PC-3 (cell line): ENCODE measurements at regions of chr18 and their contacts with region 1.

Region 1: DNA sequence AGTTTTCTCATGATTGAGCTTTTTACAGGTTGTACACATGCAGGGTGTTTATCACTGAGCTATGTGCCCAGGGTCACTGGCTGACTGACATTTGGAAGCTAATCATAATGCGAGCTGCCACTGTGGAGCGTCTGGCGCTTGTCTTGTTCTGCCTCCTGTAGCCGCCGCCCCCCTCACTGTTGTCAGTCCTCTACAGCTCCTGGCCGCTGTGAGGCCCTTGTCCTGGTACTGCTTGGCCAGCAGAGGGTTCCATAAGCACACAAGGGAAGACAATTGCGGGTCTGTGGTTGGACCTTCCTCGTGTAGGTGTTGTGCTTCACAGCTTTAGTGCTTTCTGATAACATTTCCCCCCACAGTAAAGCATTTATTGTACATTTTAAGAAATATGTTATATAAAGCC is 105.6 kb upstream of the LDLRAD4 start:
- DNase-seq: peak; percentile 26
- ATAC-seq: peak; percentile 87
- H3K4me3 ChIP-seq: no peak overlapping the region
- H3K27ac ChIP-seq: no peak overlapping the region
- H3K4me1 ChIP-seq: no peaks in the 10 kb centered on the region
- H3K27me3 ChIP-seq: no peaks in the 10 kb centered on the region
- CTCF ChIP-seq: peak; percentile 52

Region 2: GRCh38 chr18:12621737-12622306 is 491.2 kb before region 1 on chr18:
- CTCF ChIA-PET with region 1: no interaction called
- POLR2A ChIA-PET with region 1: no interaction called
- intact Hi-C with region 1: no loop called
- DNase-seq: peak; percentile 80
- ATAC-seq: peak; percentile 98
- H3K4me3 ChIP-seq: no peak overlapping the region
- H3K27ac ChIP-seq: peak overlapping the region; percentile 62
- H3K4me1 ChIP-seq: peaks cover 15% of the 10 kb centered on the region
- H3K27me3 ChIP-seq: no peaks in the 10 kb centered on the region
- CTCF ChIP-seq: no peak

Region 3: DNA sequence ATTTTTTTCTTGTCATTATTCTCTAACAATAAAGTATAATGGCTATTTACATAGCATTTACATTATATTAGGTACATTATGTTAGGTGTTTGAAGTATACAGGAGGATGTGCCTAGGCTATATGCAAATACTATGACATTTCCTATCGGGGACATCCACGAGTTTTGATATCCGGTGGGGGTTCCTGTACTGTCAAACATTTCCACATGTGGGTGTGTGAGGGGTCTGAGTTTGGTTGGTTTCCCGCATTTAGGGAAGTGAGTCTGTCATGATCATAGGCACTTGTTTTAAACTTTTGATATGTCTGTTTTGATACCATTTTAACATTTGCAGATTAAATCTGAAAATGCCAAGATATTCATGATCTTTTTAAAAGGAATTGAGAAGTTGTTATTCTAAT is 45.9 kb before region 1 on chr18:
- CTCF ChIA-PET with region 1: no interaction called
- POLR2A ChIA-PET with region 1: no interaction called
- intact Hi-C with region 1: loop called (anchors 10 kb)
- DNase-seq: no peak
- ATAC-seq: no peak
- H3K4me3 ChIP-seq: no peak overlapping the region
- H3K27ac ChIP-seq: no peak overlapping the region
- H3K4me1 ChIP-seq: no peaks in the 10 kb centered on the region
- H3K27me3 ChIP-seq: no peaks in the 10 kb centered on the region
- CTCF ChIP-seq: no peak

Region 4: DNA sequence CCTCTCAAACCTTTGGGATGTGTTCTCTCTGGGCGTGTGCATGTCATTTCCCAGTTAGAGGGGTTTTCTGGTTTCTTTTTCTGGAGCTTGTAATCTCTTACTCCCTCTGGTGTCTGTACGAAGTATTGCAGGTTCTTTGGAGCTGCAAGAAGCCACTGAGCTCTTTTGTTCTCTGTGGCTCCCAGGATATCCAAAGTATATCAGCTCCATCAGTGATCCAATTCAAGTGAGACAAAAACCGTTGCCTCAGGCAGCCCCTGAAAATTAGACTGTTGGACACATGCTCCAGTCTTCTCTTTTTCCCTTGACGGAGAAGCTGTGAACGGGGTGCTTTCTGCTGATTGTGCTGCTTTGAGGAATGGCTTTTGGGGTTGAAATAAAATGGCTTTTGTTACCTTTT is 46.6 kb after region 1 on chr18:
- CTCF ChIA-PET with region 1: interaction called, 33 read pairs
- POLR2A ChIA-PET with region 1: no interaction called
- intact Hi-C with region 1: no loop called
- DNase-seq: peak; percentile 81
- ATAC-seq: peak; percentile 73; the same call in 1 of the 2 replicates
- H3K4me3 ChIP-seq: no peak overlapping the region
- H3K27ac ChIP-seq: no peak overlapping the region
- H3K4me1 ChIP-seq: no peaks in the 10 kb centered on the region
- H3K27me3 ChIP-seq: no peaks in the 10 kb centered on the region
- CTCF ChIP-seq: peak; percentile 83